BJ (cell line): ENCODE measurements at regions of chr7 and their contacts with region 1.

Region 1: DNA sequence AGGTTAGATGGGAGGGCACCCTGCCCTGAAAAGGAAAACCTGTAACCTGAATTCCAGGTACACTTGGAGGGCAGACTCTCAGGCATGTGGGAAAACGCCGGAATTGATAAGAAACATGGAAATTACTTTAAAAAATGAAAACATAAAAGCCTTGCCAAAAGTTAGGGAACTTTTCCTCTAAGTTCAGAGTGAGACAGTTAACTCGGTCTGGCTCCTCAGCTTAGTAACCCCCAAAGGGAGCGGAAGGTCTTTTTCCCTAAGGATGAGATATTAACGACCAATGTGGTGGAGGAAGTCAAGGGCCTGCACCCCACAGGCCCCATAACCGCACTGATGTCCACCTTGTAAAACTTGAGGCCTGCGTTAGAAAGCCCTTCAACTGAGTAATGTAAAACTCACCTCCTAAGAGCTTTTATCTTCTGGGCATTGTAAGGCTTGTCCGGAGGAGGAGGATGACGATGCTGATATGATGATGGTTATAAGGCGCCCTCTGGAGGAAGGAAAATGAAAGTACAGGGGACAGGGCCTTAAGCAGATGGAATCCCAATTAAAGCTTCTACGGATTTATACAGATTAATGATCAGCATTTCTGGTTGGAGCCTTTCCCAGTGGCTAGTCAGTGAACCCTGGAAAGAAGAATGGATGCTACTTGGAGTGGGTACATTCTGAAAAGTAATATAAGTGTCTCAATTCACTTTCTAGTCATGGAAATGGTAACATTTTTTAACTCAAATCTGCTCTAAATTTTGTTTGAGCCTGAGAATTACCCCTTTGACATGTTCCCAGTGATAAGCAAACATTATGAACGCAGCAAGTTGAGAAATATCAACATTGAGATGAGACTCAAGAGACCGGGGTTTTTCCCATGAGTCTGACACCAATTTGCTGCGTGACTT is 694 bp downstream of the COL1A2 start:
- DNase-seq: no peak
- H3K4me3 ChIP-seq: peak overlapping the region; percentile 67
- H3K27me3 ChIP-seq: no peaks in the 10 kb centered on the region
- CTCF ChIP-seq: peak; percentile 66

Region 2: GRCh38 chr7:94301024-94301586 is 94.3 kb before region 1 on chr7:
- CTCF ChIA-PET with region 1: interaction called, 87 read pairs
- POLR2A ChIA-PET with region 1: interaction called, 166 read pairs
- DNase-seq: peak; percentile 90
- H3K4me3 ChIP-seq: peak overlapping the region; percentile 5; the same call in 1 of the 2 replicates
- H3K27me3 ChIP-seq: no peaks in the 10 kb centered on the region
- CTCF ChIP-seq: peak; percentile 26; the same call in 1 of the 2 replicates

Region 3: DNA sequence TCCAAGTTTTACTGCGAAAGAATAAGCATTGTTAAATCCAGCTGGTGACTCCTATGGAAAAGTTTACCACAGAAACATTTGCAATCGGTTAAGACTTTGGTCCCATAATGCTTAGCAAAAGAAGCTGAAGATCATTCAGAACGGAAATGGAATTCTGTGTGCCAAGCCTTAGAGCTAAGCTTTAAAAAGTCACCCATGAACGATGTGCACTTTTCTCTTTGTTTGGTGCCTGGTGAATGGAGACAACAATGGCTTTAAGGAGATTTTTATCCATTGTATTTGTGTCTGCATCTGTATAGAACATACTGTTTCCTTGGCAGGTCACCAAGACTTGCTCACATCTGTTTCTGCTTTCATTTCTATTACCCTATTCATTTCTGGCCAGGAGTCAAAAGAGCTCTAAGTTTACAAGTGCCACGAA is 27.0 kb before region 1 on chr7:
- CTCF ChIA-PET with region 1: interaction called, 12 read pairs
- POLR2A ChIA-PET with region 1: interaction called, 41 read pairs
- DNase-seq: peak; percentile 74
- H3K4me3 ChIP-seq: peak overlapping the region; percentile 29
- H3K27me3 ChIP-seq: no peaks in the 10 kb centered on the region
- CTCF ChIP-seq: no peak

Region 4: DNA sequence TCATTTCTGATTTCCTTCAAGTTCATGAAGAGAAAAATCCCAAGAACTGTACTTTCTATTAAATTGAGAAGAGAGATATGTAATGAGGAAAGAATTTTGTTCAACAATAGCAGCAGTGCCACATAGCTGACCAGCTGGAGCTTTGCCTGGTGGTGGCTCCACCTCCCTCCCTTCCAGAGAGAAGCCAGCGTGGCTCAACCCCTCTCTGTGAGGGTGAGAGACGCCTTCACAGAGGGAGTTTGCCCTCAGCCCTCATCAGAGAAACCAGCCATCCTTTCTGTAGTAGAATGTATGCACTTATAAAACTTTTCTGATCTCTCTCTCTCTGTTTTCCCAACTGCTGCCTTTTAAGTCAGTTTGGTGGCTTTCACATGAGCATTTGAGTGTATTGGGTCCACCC is 21.2 kb before region 1 on chr7:
- CTCF ChIA-PET with region 1: interaction called, 16 read pairs
- POLR2A ChIA-PET with region 1: interaction called, 47 read pairs
- DNase-seq: peak; percentile 83
- H3K4me3 ChIP-seq: peak overlapping the region; percentile 43
- H3K27me3 ChIP-seq: no peaks in the 10 kb centered on the region
- CTCF ChIP-seq: no peak